ENCODE measurements at regions of chr6 and their contacts with region 1.

Region 1: DNA sequence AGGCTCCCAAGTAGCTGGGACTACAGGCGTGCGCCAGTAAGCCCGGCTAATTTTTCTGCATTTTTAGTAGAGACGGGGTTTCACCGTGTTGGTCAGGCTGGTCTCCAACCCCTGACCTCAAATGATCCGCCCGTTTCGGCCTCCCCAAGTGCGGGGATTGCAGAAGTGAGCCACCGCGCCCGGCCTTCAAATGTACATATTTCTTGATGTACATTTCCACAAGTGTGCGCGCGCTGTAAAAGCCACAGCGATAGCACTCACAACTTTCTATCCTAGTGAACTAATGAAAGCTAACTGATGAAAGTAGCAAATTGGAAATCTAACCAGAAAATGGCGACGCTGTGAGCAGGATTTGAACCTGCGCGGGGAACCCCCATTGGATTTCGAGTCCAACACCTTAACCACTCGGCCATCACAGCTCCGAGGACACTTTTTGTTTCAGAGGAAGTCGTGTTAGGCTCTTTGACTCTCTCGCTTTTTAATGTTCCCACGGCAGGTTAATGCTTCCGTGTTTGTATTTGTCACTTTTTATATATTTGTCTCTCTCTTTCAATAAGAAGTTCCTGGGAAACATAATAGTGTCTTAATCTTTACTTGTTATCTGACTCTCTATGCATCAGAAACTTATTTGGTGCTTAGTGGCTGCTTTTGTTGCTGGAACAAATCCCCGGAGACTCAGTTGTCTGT is 199.4 kb upstream of the ZNF184 start:
- DNase-seq: peak; percentile 90
- ATAC-seq: peak; percentile 64
- H3K4me3 ChIP-seq: peak overlapping the region; percentile 71
- H3K27ac ChIP-seq: peak overlapping the region; percentile 22
- H3K4me1 ChIP-seq: peaks cover 15% of the 10 kb centered on the region
- H3K27me3 ChIP-seq: no peaks in the 10 kb centered on the region
- CTCF ChIP-seq: no peak

Region 2: DNA sequence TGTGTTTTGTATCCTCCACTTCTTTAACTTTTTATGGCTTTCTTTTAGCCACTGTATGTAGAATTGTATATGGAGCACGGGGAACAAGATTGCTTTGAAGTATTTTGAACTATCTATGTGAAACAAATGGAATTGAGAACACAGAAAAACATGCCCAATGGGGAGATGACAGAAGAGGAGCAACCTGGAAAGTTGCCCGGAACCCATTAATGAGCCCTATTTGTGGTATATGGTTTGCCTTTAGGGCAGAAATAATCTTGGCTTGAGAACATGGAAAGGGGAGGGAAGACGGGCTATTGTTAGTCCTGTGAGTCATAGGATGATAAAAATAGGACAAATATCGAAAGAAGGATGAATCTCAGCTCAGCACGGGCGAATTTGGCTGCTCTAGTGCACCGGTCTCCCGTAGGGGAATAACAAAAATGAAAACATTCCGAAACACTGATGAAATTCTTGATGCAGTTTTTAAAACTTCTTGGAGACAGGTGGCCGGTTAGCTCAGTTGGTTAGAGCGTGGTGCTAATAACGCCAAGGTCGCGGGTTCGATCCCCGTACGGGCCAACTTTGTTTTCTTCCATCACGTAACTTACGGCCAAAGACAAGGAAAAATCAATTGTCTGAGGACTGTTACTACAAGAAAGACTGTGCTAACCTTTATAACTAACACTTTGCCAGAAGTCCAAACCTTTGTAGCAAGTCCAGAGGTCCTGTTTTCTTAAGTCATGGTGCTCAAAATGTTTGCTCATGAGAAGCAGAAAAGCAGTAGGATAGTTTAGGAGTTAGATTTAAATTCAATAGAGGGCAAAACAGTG is 1118.4 kb before region 1 on chr6:
- CTCF ChIA-PET with region 1: no interaction called
- POLR2A ChIA-PET with region 1: no interaction called
- intact Hi-C with region 1: loop called (anchors 5 kb)
- DNase-seq: peak; percentile 95
- ATAC-seq: peak; percentile 63
- H3K4me3 ChIP-seq: peak overlapping the region; percentile 93
- H3K27ac ChIP-seq: peak overlapping the region; percentile 62
- H3K4me1 ChIP-seq: peaks cover 15% of the 10 kb centered on the region
- H3K27me3 ChIP-seq: no peaks in the 10 kb centered on the region
- CTCF ChIP-seq: no peak

Region 3: GRCh38 chr6:27138837-27139755 is 533.2 kb before region 1 on chr6:
- CTCF ChIA-PET with region 1: no interaction called
- POLR2A ChIA-PET with region 1: no interaction called
- intact Hi-C with region 1: no loop called
- DNase-seq: no peak
- ATAC-seq: no peak
- H3K4me3 ChIP-seq: no peak overlapping the region
- H3K27ac ChIP-seq: no peak overlapping the region
- H3K4me1 ChIP-seq: peaks cover 11% of the 10 kb centered on the region; the same call in 1 of the 2 replicates
- H3K27me3 ChIP-seq: no peaks in the 10 kb centered on the region
- CTCF ChIP-seq: no peak

Region 4: GRCh38 chr6:27479319-27480182 is 192.7 kb before region 1 on chr6:
- CTCF ChIA-PET with region 1: no interaction called
- POLR2A ChIA-PET with region 1: interaction called, 14 read pairs
- intact Hi-C with region 1: no loop called
- DNase-seq: peak; percentile 89
- ATAC-seq: peak; percentile 71
- H3K4me3 ChIP-seq: peak overlapping the region; percentile 83
- H3K27ac ChIP-seq: peak overlapping the region; percentile 81
- H3K4me1 ChIP-seq: peaks cover 8% of the 10 kb centered on the region; the same call in 1 of the 2 replicates
- H3K27me3 ChIP-seq: no peaks in the 10 kb centered on the region
- CTCF ChIP-seq: no peak

Region 5: GRCh38 chr6:27518881-27519795 is 153.1 kb before region 1 on chr6:
- CTCF ChIA-PET with region 1: no interaction called
- POLR2A ChIA-PET with region 1: no interaction called
- intact Hi-C with region 1: loop called (anchors 5 kb)
- DNase-seq: peak; percentile 96
- ATAC-seq: peak; percentile 73
- H3K4me3 ChIP-seq: peak overlapping the region; percentile 89
- H3K27ac ChIP-seq: peak overlapping the region; percentile 31; the same call in 1 of the 2 replicates
- H3K4me1 ChIP-seq: peaks cover 5% of the 10 kb centered on the region; the same call in 1 of the 2 replicates
- H3K27me3 ChIP-seq: no peaks in the 10 kb centered on the region
- CTCF ChIP-seq: peak; percentile 88

Region 6: GRCh38 chr6:27630727-27631608 is 41.3 kb before region 1 on chr6:
- CTCF ChIA-PET with region 1: no interaction called
- POLR2A ChIA-PET with region 1: no interaction called
- intact Hi-C with region 1: no loop called
- DNase-seq: peak; percentile 66
- ATAC-seq: peak; percentile 92
- H3K4me3 ChIP-seq: peak overlapping the region; percentile 75
- H3K27ac ChIP-seq: no peak overlapping the region
- H3K4me1 ChIP-seq: 0 out of 2 replicates have a peak, but pooled peaks cover 4% of the 10 kb centered on the region
- H3K27me3 ChIP-seq: no peaks in the 10 kb centered on the region
- CTCF ChIP-seq: peak; percentile 31; the same call in 1 of the 2 replicates

Region 7: DNA sequence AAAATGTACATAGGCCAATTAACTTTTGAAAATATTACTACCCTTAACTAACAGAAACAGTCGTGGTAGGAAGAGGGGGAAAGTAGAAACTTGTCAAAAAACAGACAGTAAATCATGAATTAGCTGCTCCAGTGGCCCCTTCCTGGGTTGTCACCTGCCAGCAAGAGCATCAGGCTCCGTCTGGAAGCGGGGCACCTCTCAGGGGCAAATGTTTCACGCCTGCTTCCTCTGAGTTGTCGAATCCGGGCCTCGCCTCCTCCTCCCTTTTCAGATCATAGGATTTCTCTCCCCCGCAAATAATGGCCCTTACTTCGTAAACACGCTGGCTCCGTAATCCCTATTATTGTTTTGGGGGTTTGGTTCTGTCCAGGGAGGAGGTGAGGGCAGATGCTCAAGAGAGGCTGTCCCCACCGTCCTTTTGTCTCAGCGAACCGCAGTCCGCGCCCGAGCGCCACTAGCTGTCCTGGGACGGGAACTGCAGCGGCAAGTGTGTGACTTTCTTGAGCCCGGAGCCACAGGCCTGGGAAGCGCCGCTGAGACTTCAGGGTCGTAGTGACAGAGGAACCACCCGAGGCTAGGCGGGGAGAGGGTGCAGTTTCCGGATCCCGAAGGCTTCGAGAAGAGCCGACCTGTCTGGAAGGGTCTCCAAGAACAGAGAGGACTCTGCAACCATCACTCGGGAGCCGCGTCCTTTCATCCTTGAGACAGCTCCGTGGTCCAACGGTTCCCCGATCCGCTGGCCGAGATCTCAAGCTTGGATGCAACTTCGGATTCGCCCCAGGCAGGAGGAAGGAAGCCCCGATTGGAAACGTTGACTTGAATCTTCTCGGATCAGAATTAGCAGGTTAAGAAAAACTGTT is 15.1 kb after region 1 on chr6:
- CTCF ChIA-PET with region 1: interaction called, 3 read pairs
- POLR2A ChIA-PET with region 1: no interaction called
- intact Hi-C with region 1: loop called (anchors 1 kb)
- DNase-seq: peak; percentile 86
- ATAC-seq: peak; percentile 78
- H3K4me3 ChIP-seq: peak overlapping the region; percentile 83
- H3K27ac ChIP-seq: 0 out of 2 replicates have a peak overlapping the region, but pooled peaks have one; percentile 7
- H3K4me1 ChIP-seq: no peaks in the 10 kb centered on the region
- H3K27me3 ChIP-seq: no peaks in the 10 kb centered on the region
- CTCF ChIP-seq: peak; percentile 90

Region 8: GRCh38 chr6:27795697-27796494 is 123.6 kb after region 1 on chr6:
- CTCF ChIA-PET with region 1: no interaction called
- POLR2A ChIA-PET with region 1: no interaction called
- intact Hi-C with region 1: loop called (anchors 5 kb)
- DNase-seq: peak; percentile 99
- ATAC-seq: peak; percentile 26
- H3K4me3 ChIP-seq: peak overlapping the region; percentile 16; the same call in 1 of the 2 replicates
- H3K27ac ChIP-seq: no peak overlapping the region
- H3K4me1 ChIP-seq: peaks cover 13% of the 10 kb centered on the region; the same call in 1 of the 2 replicates
- H3K27me3 ChIP-seq: no peaks in the 10 kb centered on the region
- CTCF ChIP-seq: peak; percentile 81

Measured in PC-3 (cell line).